Body of pancreas (tissue), 4 donors: ENCODE measurements at regions of chr7 and their contacts with region 1.

Region 1: GRCh38 chr7:137656227-137656849 is 190.4 kb downstream of the DGKI start:
- DNase-seq: peak; percentile 77 to 87 (median 82)
- ATAC-seq: peak; percentile 64
- H3K4me3 ChIP-seq: no peak overlapping the region
- H3K27ac ChIP-seq: no peak overlapping the region
- H3K4me1 ChIP-seq: no peaks in the 10 kb centered on the region
- H3K27me3 ChIP-seq: no peaks in the 10 kb centered on the region
- CTCF ChIP-seq: peak in 6 of 7 experiments; percentile 72 to 79 (median 74)
- POLR2A ChIP-seq: no peak

Region 2: DNA sequence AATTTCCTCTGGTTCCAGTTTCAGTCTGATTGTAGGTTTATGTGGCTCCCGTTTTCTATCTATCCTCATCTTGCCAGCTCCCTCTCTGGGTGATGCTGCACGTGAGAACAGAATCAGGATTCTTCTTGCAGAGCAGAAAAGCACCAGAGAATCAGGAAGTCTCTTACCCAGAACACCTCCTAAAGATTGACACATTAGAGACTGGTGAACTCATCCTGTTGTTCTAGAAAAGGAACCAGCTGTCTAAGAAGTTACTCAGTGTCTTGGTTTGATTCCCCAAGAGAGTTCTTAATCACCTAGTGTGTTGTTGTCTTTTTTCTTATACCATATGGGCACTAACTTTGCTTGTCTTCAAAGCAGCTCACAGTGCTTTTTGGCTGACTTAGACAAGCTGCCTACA is 38.1 kb after region 1 on chr7:
- intact Hi-C with region 1: no loop called
- DNase-seq: no peak
- ATAC-seq: no peak
- H3K4me3 ChIP-seq: no peak overlapping the region
- H3K27ac ChIP-seq: no peak overlapping the region
- H3K4me1 ChIP-seq: peaks cover 4% of the 10 kb centered on the region
- H3K27me3 ChIP-seq: no peaks in the 10 kb centered on the region
- CTCF ChIP-seq: no peak
- POLR2A ChIP-seq: no peak

Region 3: GRCh38 chr7:137898839-137899721 is 242.7 kb after region 1 on chr7:
- intact Hi-C with region 1: loop called (anchors 10 kb)
- DNase-seq: peak; percentile 75 to 82 (median 78)
- ATAC-seq: peak; percentile 88
- H3K4me3 ChIP-seq: no peak overlapping the region
- H3K27ac ChIP-seq: no peak overlapping the region
- H3K4me1 ChIP-seq: no peaks in the 10 kb centered on the region
- H3K27me3 ChIP-seq: no peaks in the 10 kb centered on the region
- CTCF ChIP-seq: peak; percentile 74 to 91 (median 83)
- POLR2A ChIP-seq: no peak

Region 4: GRCh38 chr7:138008547-138009349 is 352.4 kb after region 1 on chr7:
- intact Hi-C with region 1: loop called (anchors 5 kb)
- DNase-seq: peak in 2 of 4 donors; percentile 22 to 40
- ATAC-seq: peak; percentile 78
- H3K4me3 ChIP-seq: no peak overlapping the region
- H3K27ac ChIP-seq: no peak overlapping the region
- H3K4me1 ChIP-seq: peaks cover 4% of the 10 kb centered on the region
- H3K27me3 ChIP-seq: no peaks in the 10 kb centered on the region
- CTCF ChIP-seq: peak; percentile 74 to 97 (median 90)
- POLR2A ChIP-seq: no peak